PC-9 (cell line): ENCODE measurements at regions of chr11 and their contacts with region 1.

Region 1: GRCh38 chr11:71333300-71333872 is 81.0 kb upstream of the SHANK2 start:
- DNase-seq: no peak
- H3K4me3 ChIP-seq: no peak overlapping the region
- H3K27ac ChIP-seq: no peak overlapping the region
- H3K4me1 ChIP-seq: no peaks in the 10 kb centered on the region
- H3K27me3 ChIP-seq: no peaks in the 10 kb centered on the region; the same call in none of the 2 replicates
- CTCF ChIP-seq: no peak

Region 2: DNA sequence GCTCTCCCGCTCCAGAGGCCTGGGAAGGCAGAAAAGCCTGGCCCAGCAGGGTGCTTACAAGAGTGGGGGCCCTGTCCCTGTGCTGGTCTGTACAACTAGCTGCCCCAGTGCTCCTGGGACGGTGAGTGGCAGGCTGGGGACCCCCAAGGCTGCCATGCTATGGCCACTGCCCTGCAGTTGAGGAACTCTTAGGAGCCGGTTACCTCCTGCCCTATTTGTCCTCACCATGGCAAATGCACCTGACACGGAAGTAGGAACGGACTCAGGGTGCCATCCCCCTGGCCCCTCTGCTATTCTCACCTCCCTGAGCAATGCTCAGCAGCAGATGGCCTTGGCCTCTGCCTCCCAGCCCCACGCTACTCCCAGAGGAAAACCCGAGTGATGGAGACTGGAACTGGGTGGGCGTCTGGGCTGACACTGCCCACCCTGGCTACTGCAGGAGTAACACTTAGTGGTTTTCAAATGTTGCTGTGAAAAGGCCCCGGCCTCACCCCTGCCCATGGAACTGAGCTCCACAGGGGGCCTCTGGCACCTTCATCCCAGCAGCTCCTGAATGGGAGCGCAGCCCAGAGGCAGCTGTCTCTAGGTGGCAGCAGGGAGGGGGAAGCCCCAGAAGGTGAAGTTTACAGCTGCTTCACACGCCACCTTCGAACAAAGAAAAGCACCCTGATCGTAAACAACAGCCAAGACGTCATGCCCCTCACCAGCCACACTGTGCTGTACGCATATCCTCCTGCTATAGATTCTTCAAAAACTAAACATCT is 829.7 kb before region 1 on chr11:
- CTCF ChIA-PET with region 1: interaction called, 13 read pairs
- POLR2A ChIA-PET with region 1: no interaction called
- intact Hi-C with region 1: no loop called
- DNase-seq: no peak
- H3K4me3 ChIP-seq: no peak overlapping the region
- H3K27ac ChIP-seq: no peak overlapping the region
- H3K4me1 ChIP-seq: no peaks in the 10 kb centered on the region
- H3K27me3 ChIP-seq: no peaks in the 10 kb centered on the region
- CTCF ChIP-seq: peak; percentile 46; the same call in 1 of the 2 replicates

Region 3: GRCh38 chr11:71086675-71087258 is 246.6 kb before region 1 on chr11:
- CTCF ChIA-PET with region 1: interaction called, 21 read pairs
- POLR2A ChIA-PET with region 1: no interaction called
- intact Hi-C with region 1: loop called (anchors 1 kb)
- DNase-seq: peak in 1 of 2 experiments; percentile 46
- H3K4me3 ChIP-seq: no peak overlapping the region
- H3K27ac ChIP-seq: no peak overlapping the region
- H3K4me1 ChIP-seq: no peaks in the 10 kb centered on the region
- H3K27me3 ChIP-seq: no peaks in the 10 kb centered on the region
- CTCF ChIP-seq: peak; percentile 73

Region 4: DNA sequence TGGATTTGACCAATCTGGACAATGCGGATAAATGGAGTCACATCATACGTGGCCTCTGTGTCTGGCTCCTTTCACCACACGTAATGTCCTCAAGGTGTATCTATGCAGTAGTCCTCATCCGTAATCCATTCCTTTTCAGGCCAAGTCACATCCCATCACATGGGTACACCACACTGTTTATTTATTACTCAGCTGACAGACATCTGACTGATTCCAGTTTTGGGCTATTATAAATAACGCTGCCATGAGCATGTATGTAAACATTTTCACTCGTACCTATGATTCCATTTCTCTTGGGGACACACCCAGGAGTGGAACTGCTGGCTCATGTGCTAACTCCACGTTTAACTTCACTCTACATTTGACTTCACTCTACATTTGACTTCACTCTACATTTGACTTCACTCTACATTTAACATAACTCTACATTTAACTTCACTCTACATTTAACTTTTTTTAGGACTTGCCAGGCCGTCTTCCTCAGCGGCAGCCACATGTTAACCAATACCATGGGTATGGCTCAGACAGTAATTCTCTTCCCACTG is 133.1 kb before region 1 on chr11:
- CTCF ChIA-PET with region 1: interaction called, 11 read pairs
- POLR2A ChIA-PET with region 1: no interaction called
- intact Hi-C with region 1: no loop called
- DNase-seq: no peak
- H3K4me3 ChIP-seq: no peak overlapping the region
- H3K27ac ChIP-seq: no peak overlapping the region
- H3K4me1 ChIP-seq: no peaks in the 10 kb centered on the region
- H3K27me3 ChIP-seq: no peaks in the 10 kb centered on the region
- CTCF ChIP-seq: no peak

Region 5: DNA sequence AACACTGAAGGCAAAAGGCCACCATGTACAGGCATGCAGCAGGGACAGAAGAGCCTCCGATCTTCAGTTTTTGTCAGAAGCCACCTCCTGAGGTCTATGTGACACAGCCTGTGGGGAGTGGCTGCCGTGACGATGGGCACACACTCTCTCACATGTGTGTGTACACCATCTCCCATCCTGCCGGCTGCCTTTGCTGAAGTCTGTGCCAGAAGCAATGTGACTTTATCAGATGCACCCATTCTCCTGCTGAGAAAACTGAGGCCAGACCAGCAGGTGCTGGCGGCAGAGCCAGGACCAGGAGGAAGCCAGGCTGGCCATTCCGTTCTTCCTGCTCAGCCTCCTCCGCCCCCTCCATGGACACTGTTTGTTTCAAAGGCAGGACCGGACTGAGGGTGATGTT is 97.7 kb before region 1 on chr11:
- CTCF ChIA-PET with region 1: no interaction called
- POLR2A ChIA-PET with region 1: no interaction called
- intact Hi-C with region 1: no loop called
- DNase-seq: no peak
- H3K4me3 ChIP-seq: no peak overlapping the region
- H3K27ac ChIP-seq: no peak overlapping the region
- H3K4me1 ChIP-seq: peaks cover 10% of the 10 kb centered on the region
- H3K27me3 ChIP-seq: no peaks in the 10 kb centered on the region
- CTCF ChIP-seq: no peak